ENCODE measurements at regions of chr4 and their contacts with region 1.

Region 1: DNA sequence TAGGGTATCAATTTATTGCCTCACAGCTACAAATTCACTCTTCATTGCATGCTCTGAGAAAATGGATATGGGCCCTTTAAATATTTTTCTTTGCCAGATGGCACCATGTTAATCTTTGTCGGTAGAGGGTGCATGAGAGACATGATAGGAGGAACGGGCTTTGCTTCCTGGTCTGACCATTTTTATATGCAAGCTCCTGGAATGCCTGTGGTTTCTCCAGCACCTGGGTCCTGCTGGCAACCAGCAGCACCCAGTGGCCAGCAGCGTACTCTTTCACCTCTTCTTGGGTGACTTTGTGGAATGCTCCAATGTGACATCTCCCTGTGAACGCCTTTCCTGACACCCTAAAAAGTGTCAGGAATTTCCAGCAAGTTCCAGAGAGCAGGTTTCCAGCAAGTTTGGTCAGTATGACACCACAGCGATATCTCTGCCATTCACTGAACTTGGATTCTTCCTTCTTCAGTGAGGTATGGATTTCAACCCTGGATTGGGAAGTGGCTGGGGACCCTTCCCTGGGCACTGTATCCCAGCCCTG is 140.3 kb upstream of the PGRMC2 start:
- DNase-seq: peak; percentile 81
- H3K4me3 ChIP-seq: peak overlapping the region in 2 of 3 experiments; percentile 8 to 49
- H3K27ac ChIP-seq: peak overlapping the region; percentile 19
- H3K4me1 ChIP-seq: peaks cover 20% of the 10 kb centered on the region
- H3K27me3 ChIP-seq: no peaks in the 10 kb centered on the region
- CTCF ChIP-seq: peak; percentile 63 to 72

Region 2: GRCh38 chr4:127965062-127965802 is 462.7 kb before region 1 on chr4 and contains the starts of genes ABHD18 and MFSD8:
- CTCF ChIA-PET with region 1: no interaction called
- dilution Hi-C with region 1: no loop called
- in situ Hi-C with region 1: no loop called
- intact Hi-C with region 1: no loop called
- DNase-seq: peak; percentile 99
- H3K4me3 ChIP-seq: peak within 1 kb of the TSS; percentile 60 to 97 (median 88)
- H3K27ac ChIP-seq: peak within 1 kb of the TSS; percentile 87
- H3K4me1 ChIP-seq: peaks cover 10% of the 10 kb centered on the region
- H3K27me3 ChIP-seq: no peaks in the 10 kb centered on the region
- CTCF ChIP-seq: peak in 1 of 2 donors; percentile 58
- total RNA-seq, gene ABHD18: 6.3 to 7.7 TPM
- total RNA-seq, gene MFSD8: 23.3 to 28.0 TPM

Region 3: GRCh38 chr4:128060699-128061565 is 367.0 kb before region 1 on chr4 and contains the start of gene LARP1B:
- CTCF ChIA-PET with region 1: no interaction called
- dilution Hi-C with region 1: no loop called
- in situ Hi-C with region 1: no loop called
- intact Hi-C with region 1: loop called (anchors 5 kb)
- DNase-seq: peak; percentile 98
- H3K4me3 ChIP-seq: peak within 1 kb of the TSS; percentile 81 to 97 (median 97)
- H3K27ac ChIP-seq: peak within 1 kb of the TSS; percentile 90
- H3K4me1 ChIP-seq: no peaks in the 10 kb centered on the region
- H3K27me3 ChIP-seq: no peaks in the 10 kb centered on the region
- CTCF ChIP-seq: no peak
- total RNA-seq, gene LARP1B: 15.3 to 27.0 TPM

Region 4: DNA sequence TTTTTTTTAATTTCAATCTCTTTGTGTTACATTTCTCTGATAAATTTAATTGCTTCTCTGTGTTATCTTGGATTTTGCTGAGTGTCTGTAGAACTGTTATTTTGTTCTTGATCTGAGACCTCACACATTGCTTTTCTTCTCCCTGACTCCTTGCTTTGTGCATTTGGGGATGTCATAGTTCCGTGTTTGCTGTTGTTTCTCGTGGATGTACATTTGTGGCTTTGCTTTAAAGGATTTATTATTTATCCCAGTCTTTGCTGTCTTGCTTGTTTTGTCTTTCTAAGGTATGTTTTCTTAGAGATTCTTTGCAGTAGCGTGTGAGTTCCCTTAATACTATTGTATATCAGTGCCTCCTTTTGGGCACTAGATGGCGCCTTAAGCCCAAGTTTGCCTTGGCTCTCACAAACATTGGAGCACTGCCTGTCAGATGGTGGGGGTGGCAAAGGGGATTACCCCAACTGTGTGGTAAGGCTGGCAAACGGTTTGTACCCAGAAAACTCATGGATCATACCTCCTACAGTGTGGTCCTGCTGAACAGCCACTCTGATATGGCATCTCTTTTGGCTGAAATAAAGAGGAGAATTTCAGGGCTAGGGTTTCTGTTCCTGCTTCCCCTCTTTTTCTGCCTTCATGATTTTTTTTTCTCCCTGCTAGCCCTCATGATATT is 236.7 kb before region 1 on chr4:
- CTCF ChIA-PET with region 1: interaction called, 3 read pairs
- dilution Hi-C with region 1: no loop called
- in situ Hi-C with region 1: loop called in 1 of 2 experiments (anchors 25 kb)
- intact Hi-C with region 1: loop called (anchors 1 kb)
- DNase-seq: peak; percentile 55
- H3K4me3 ChIP-seq: no peak overlapping the region
- H3K27ac ChIP-seq: no peak overlapping the region
- H3K4me1 ChIP-seq: no peaks in the 10 kb centered on the region
- H3K27me3 ChIP-seq: no peaks in the 10 kb centered on the region
- CTCF ChIP-seq: peak; percentile 86 to 91

Region 5: GRCh38 chr4:128220286-128221235 is 207.3 kb before region 1 on chr4:
- CTCF ChIA-PET with region 1: no interaction called
- dilution Hi-C with region 1: no loop called
- in situ Hi-C with region 1: no loop called
- intact Hi-C with region 1: loop called (anchors 5 kb)
- DNase-seq: peak; percentile 42
- H3K4me3 ChIP-seq: no peak overlapping the region
- H3K27ac ChIP-seq: no peak overlapping the region
- H3K4me1 ChIP-seq: peaks cover 6% of the 10 kb centered on the region
- H3K27me3 ChIP-seq: no peaks in the 10 kb centered on the region
- CTCF ChIP-seq: peak; percentile 23 to 39

Region 6: DNA sequence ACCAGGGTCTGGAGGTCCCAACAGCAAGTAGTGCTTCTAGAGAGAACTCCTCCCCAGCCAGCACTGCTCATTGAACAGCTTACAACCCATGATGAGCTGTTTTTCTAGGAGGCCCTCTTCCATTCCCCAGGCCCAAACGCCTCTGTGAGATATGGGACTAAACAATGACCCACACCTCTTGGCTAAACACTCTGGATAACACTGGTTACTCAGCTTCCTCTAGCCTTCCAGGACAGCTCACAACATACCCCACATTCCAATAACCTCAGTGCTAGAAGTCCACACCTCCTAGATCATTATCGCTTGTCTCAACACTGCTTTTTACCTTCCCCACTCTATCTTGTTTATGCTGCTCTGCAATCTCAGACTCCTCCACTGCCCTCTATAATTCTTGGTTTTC is 104.9 kb before region 1 on chr4:
- CTCF ChIA-PET with region 1: no interaction called
- dilution Hi-C with region 1: no loop called
- in situ Hi-C with region 1: no loop called
- intact Hi-C with region 1: loop called (anchors 5 kb)
- DNase-seq: peak; percentile 85
- H3K4me3 ChIP-seq: no peak overlapping the region
- H3K27ac ChIP-seq: peak overlapping the region; percentile 65
- H3K4me1 ChIP-seq: peaks cover 33% of the 10 kb centered on the region
- H3K27me3 ChIP-seq: no peaks in the 10 kb centered on the region
- CTCF ChIP-seq: no peak

Region 7: GRCh38 chr4:128338634-128339355 is 89.1 kb before region 1 on chr4:
- CTCF ChIA-PET with region 1: no interaction called
- dilution Hi-C with region 1: loop called (anchors 5 kb)
- in situ Hi-C with region 1: no loop called
- intact Hi-C with region 1: no loop called
- DNase-seq: peak; percentile 73
- H3K4me3 ChIP-seq: no peak overlapping the region
- H3K27ac ChIP-seq: no peak overlapping the region
- H3K4me1 ChIP-seq: peaks cover 21% of the 10 kb centered on the region
- H3K27me3 ChIP-seq: no peaks in the 10 kb centered on the region
- CTCF ChIP-seq: no peak

Region 8: GRCh38 chr4:128386761-128387599 is 40.9 kb before region 1 on chr4:
- CTCF ChIA-PET with region 1: interaction called, 5 read pairs
- dilution Hi-C with region 1: no loop called
- in situ Hi-C with region 1: no loop called
- intact Hi-C with region 1: loop called (anchors 2 kb)
- DNase-seq: peak; percentile 83
- H3K4me3 ChIP-seq: no peak overlapping the region
- H3K27ac ChIP-seq: peak overlapping the region; percentile 51
- H3K4me1 ChIP-seq: peaks cover 37% of the 10 kb centered on the region
- H3K27me3 ChIP-seq: no peaks in the 10 kb centered on the region
- CTCF ChIP-seq: no peak